ENCODE measurements at regions of chr12 and their contacts with region 1.

Region 1: DNA sequence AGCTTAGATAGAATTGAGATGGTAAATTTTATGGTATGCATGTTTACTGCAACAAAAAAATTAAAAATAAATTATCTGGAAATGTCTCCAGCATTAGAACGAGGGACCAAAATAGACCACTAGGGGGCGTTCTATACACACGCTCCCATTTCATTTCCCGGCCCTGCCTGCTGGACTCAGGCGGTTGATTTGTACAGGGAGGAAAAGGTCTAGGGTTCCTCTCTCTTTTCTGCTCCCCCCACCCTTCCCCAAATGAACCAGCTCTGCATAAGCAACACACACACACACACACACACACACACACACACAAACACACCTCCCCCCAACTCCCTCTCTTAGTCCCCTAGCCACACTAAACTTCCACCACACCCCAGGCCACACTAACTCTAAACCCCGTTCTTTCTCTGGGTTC is 7.8 kb upstream of the DTX1 start:
- DNase-seq: peak; percentile 77
- CTCF ChIP-seq: peak; percentile 73

Region 2: GRCh38 chr12:113098446-113098896 is 49.7 kb after region 1 on chr12:
- in situ Hi-C with region 1: loop called (anchors 5 kb)
- DNase-seq: peak; percentile 87
- CTCF ChIP-seq: peak; percentile 95

Region 3: GRCh38 chr12:113184900-113185773 is 136.4 kb after region 1 on chr12 and contains the starts of genes DDX54 and RITA1:
- in situ Hi-C with region 1: loop called (anchors 5 kb)
- DNase-seq: peak; percentile 93
- CTCF ChIP-seq: no peak

Measured in GM13977 (cell line).